Activated CD8-positive, alpha-beta T cell treated with anti-CD3 and anti-CD28 coated beads, Interleukin-2, amount 10 ng/mL, durations not matched to agents 7 days and 5 days (primary cell): ENCODE measurements at regions of chr14 and their contacts with region 1.

Region 1: GRCh38 chr14:96796851-96797581 is at the start of gene VRK1:
- DNase-seq: peak; percentile 94
- ATAC-seq: peak; percentile 96
- H3K4me3 Mint-ChIP-seq: peak within 1 kb of the TSS; percentile 90
- H3K27ac Mint-ChIP-seq: peak within 1 kb of the TSS; percentile 94
- H3K4me1 Mint-ChIP-seq: peaks cover 22% of the 10 kb centered on the region
- H3K27me3 Mint-ChIP-seq: no peaks in the 10 kb centered on the region
- total RNA-seq, gene VRK1: 71.1 to 76.5 TPM

Region 2: GRCh38 chr14:96811985-96812667 is 15.1 kb after region 1 on chr14:
- CTCF ChIA-PET with region 1: interaction called, 3 read pairs
- POLR2A ChIA-PET with region 1: interaction called, 12 read pairs
- DNase-seq: no peak
- ATAC-seq: peak; percentile 49
- H3K4me3 Mint-ChIP-seq: no peak overlapping the region
- H3K27ac Mint-ChIP-seq: no peak overlapping the region
- H3K4me1 Mint-ChIP-seq: peaks cover 45% of the 10 kb centered on the region
- H3K27me3 Mint-ChIP-seq: no peaks in the 10 kb centered on the region